ENCODE measurements at regions of chr12 and their contacts with region 1.

Region 1: DNA sequence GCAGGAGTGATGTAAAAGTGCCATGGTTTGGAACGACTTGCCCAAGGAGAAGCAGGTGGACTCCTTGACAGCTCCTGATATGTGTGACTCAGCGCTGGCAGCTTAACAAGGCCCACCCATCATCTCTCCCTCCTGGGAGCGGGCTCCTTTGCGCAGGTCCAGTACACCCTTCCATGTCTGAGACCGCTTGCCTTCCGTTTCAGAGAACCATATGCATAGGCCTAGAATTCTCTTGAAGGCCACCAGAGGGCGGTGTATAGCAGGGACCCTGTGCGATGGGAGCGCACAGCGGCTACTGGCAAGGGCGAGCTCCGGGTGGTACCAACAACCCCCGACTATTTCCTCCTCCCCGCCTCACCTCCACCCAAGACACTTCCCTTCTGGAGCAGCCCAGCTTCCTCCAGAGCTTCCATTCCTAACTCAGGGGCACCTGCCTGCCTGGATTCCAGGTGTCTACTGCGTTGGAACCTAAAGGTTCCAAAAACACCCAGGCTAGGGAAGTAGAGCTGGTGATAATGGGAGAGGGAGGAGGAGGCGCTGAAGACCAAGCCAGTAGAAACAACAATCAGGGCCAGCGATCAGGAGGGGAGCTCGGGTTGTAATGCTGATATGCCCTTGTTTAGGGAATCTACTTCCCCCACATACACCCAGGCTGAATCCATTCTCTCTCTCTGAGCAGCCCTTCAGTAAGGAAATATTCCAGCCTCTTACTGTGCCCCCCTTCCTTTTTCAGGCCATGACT is 6.2 kb downstream of the DHH start:
- DNase-seq: peak; percentile 75
- H3K4me3 Mint-ChIP-seq: peak overlapping the region; percentile 22
- H3K27ac Mint-ChIP-seq: peak overlapping the region; percentile 24
- H3K4me1 Mint-ChIP-seq: peaks cover 64% of the 10 kb centered on the region
- H3K27me3 Mint-ChIP-seq: peaks cover 44% of the 10 kb centered on the region

Region 2: GRCh38 chr12:49060237-49061156 is 27.9 kb before region 1 on chr12 and contains the start of gene KMT2D:
- CTCF ChIA-PET with region 1: interaction called, 103 read pairs
- POLR2A ChIA-PET with region 1: interaction called, 26 read pairs
- DNase-seq: peak; percentile 88
- H3K4me3 Mint-ChIP-seq: peak within 1 kb of the TSS; percentile 95
- H3K27ac Mint-ChIP-seq: peak within 1 kb of the TSS; percentile 91
- H3K4me1 Mint-ChIP-seq: peaks cover 50% of the 10 kb centered on the region
- H3K27me3 Mint-ChIP-seq: no peaks in the 10 kb centered on the region
- total RNA-seq, gene KMT2D: 82.3 to 87.8 TPM

Region 3: GRCh38 chr12:49069507-49070346 is 18.6 kb before region 1 on chr12 and contains the start of gene RHEBL1:
- CTCF ChIA-PET with region 1: interaction called, 116 read pairs
- POLR2A ChIA-PET with region 1: interaction called, 26 read pairs
- DNase-seq: peak; percentile 100
- H3K4me3 Mint-ChIP-seq: peak within 1 kb of the TSS; percentile 97
- H3K27ac Mint-ChIP-seq: peak within 1 kb of the TSS; percentile 86
- H3K4me1 Mint-ChIP-seq: peaks cover 33% of the 10 kb centered on the region
- H3K27me3 Mint-ChIP-seq: no peaks in the 10 kb centered on the region
- total RNA-seq, gene RHEBL1: 14.8 to 15.8 TPM

Region 4: DNA sequence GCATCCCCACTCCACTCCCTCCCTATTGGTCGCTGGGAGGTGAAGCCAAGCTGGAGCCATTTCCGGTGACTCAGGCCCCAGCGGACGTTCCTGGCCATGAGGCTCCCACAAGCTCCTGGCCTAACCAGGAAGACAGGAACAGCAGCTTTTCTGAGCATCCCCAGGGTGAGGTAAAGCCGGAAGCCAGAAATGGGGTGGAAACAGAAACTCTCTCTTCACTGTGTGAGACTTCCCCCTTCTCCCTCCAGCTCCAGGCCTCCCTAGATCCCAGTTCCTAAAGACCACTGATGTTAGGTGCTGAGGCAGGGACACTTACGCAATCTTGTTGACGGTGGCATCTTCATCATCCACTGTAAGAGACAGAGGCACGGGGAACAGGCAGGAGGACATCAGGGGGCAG is 17.2 kb after region 1 on chr12:
- CTCF ChIA-PET with region 1: interaction called, 112 read pairs
- POLR2A ChIA-PET with region 1: interaction called, 22 read pairs
- DNase-seq: no peak
- H3K4me3 Mint-ChIP-seq: no peak overlapping the region
- H3K27ac Mint-ChIP-seq: no peak overlapping the region
- H3K4me1 Mint-ChIP-seq: peaks cover 28% of the 10 kb centered on the region
- H3K27me3 Mint-ChIP-seq: no peaks in the 10 kb centered on the region

Region 5: GRCh38 chr12:49110464-49111155 is 22.2 kb after region 1 on chr12 and contains the start of gene LMBR1L:
- CTCF ChIA-PET with region 1: interaction called, 32 read pairs
- POLR2A ChIA-PET with region 1: interaction called, 22 read pairs
- DNase-seq: peak; percentile 97
- H3K4me3 Mint-ChIP-seq: peak within 1 kb of the TSS; percentile 88
- H3K27ac Mint-ChIP-seq: peak within 1 kb of the TSS; percentile 82
- H3K4me1 Mint-ChIP-seq: peaks cover 31% of the 10 kb centered on the region
- H3K27me3 Mint-ChIP-seq: peaks cover 2% of the 10 kb centered on the region
- total RNA-seq, gene LMBR1L: 82.8 to 85.3 TPM

Region 6: DNA sequence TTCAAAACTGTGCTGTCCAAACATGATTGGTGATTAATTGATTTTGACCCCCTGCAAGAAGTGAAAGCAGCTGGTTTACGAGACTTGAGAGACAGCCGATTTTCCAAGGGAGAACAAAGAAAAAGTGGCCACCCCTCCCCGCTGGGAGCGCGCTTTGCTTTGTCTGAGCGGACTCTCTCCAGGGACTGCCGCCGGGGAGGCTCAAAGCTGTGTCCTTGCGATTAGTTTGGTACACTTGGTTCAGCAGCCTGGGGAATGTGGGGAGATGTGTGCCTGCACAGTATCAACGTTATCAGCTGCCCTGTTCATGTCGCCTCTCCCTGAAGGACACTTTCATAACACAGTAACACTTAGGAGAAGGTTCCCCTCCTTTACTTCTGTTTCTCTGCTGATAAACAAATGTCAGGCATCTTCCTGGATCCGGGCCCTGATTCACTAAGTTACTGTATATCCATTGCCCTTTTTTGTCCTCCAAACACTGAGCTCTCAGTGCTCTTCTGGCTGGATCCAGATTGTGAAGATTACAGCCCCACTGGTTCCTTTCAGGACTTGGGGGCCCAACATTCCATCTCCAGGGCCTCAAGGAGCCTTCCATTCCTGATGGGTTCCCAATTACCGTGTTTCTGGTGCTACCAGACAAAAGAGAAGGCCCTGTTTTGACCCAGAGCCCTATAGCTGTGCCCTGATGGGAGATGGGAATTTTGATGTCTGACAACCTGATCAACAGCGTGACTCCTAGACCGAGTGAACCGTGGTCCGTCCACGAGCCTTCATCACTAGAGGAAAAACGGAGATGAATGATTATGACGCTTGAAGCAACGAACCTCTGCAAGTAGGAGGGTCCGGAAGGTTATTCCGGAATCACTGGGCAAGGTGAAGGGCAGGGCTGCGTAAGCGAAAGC is 144.8 kb after region 1 on chr12:
- CTCF ChIA-PET with region 1: interaction called, 24 read pairs
- POLR2A ChIA-PET with region 1: interaction called, 4 read pairs
- DNase-seq: no peak
- H3K4me3 Mint-ChIP-seq: peak overlapping the region; percentile 16
- H3K27ac Mint-ChIP-seq: peak overlapping the region; percentile 45
- H3K4me1 Mint-ChIP-seq: peaks cover 25% of the 10 kb centered on the region
- H3K27me3 Mint-ChIP-seq: peaks cover 3% of the 10 kb centered on the region